ENCODE measurements at regions of chr3 and their contacts with region 1.

Region 1: GRCh38 chr3:40366203-40367162 is 20.5 kb upstream of the ENTPD3 start:
- DNase-seq: peak; percentile 75
- H3K4me3 ChIP-seq: no peak overlapping the region
- H3K27ac ChIP-seq: no peak overlapping the region
- H3K4me1 ChIP-seq: no peaks in the 10 kb centered on the region
- H3K27me3 ChIP-seq: no peaks in the 10 kb centered on the region
- CTCF ChIP-seq: no peak

Region 2: DNA sequence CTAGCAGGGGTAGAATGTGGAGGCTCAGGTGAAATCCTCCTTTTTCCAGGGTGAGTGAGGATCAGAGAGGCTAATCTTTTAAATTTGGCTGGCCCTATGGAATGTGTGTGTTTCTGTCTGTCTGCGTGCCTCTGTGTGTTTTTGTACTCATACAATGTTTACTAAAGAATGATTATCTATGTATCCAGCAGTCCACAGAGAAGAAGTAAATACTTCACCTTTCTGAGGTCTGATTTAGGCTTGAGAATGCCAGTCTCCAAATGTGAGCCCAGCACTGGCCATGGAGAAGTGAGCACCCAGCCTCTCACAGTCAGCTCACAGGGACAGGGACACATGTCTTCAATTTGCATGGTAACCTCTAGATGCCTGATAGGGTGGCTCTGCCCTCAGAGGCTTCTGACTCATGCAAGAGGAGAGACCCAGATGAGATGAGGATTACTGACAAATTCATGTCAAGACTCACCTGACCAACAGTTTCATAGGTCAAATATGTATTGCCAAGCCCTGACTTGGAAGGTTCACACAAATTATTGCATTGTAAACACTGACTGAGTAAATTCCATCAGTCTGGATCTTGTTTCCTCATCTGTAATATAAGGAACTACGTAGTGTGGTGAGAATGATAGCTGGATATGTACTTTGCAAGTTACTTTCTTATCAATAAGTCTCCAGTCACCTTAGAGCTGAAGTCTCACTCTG is 51.5 kb after region 1 on chr3:
- CTCF ChIA-PET with region 1: no interaction called
- dilution Hi-C with region 1: loop called (anchors 5 kb)
- in situ Hi-C with region 1: no loop called
- intact Hi-C with region 1: no loop called
- DNase-seq: peak; percentile 92
- H3K4me3 ChIP-seq: no peak overlapping the region
- H3K27ac ChIP-seq: peak overlapping the region; percentile 27
- H3K4me1 ChIP-seq: peaks cover 5% of the 10 kb centered on the region
- H3K27me3 ChIP-seq: no peaks in the 10 kb centered on the region
- CTCF ChIP-seq: no peak

Measured in mammary epithelial cell (primary cell).